ENCODE measurements at regions of chr6 and their contacts with region 1.

Region 1: GRCh38 chr6:15254070-15254841 is 8.4 kb downstream of the JARID2 start:
- DNase-seq: peak; percentile 79
- ATAC-seq: peak; percentile 73
- H3K4me3 ChIP-seq: peak overlapping the region in 1 of 5 experiments; percentile 27
- H3K4me3 Mint-ChIP-seq: peak overlapping the region; percentile 65
- H3K27ac ChIP-seq: peak overlapping the region; percentile 77 to 80
- H3K27ac Mint-ChIP-seq: peak overlapping the region; percentile 84
- H3K4me1 ChIP-seq: peaks cover 64 to 81% of the 10 kb centered on the region in 2 donors
- H3K4me1 Mint-ChIP-seq: peaks cover 92% of the 10 kb centered on the region
- H3K27me3 ChIP-seq: no peaks in the 10 kb centered on the region
- H3K27me3 Mint-ChIP-seq: no peaks in the 10 kb centered on the region
- CTCF ChIP-seq: peak; percentile 15

Region 2: DNA sequence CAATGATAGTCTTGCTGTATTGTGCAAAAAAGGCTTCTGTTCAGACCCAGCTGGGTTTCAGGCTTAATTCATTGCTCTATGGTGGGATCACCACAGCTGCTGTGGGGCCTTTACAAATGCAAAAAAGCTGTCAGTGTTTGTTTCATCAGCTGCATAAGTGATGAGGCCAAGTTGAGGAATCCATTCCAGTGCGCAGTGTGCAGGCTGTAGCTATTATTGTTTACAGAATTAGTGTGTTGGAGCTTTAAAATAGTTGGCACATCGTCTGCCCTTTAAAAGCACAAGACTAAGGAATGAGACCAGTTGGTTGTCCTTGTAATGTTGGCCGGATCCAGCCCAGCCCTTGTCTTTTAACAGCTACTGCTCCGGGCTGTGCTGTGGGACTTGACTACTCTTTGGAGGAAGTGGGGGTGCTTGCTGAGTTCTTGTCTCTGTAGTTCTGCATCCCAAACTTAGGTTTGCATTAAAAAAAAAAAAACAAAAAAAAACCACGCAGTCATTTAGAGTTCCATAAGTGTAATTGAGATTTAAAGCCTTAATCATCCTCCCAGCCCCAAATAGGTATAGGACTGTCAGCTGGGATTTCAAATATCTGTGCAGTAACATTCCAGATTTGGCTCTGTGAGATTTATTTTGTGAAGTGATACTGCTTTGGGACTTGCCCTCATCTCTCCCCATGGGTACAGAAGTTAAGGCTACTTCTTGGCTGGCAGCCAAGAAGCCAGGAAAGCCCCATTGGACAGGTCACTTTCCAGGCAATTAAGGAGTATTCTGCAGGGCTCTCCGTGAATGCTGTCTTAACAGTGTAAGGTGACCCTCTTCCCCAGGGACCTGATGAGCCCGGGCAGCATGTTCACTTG is 10.9 kb after region 1 on chr6:
- CTCF ChIA-PET with region 1: interaction called, 3 read pairs
- POLR2A ChIA-PET with region 1: interaction called, 4 read pairs
- intact Hi-C with region 1: loop called (anchors 2 kb)
- DNase-seq: no peak
- ATAC-seq: no peak
- H3K4me3 ChIP-seq: no peak overlapping the region
- H3K4me3 Mint-ChIP-seq: peak overlapping the region; percentile 68
- H3K27ac ChIP-seq: peak overlapping the region in 1 of 2 donors; percentile 41
- H3K27ac Mint-ChIP-seq: peak overlapping the region; percentile 56
- H3K4me1 ChIP-seq: peaks cover 74% of the 10 kb centered on the region in 2 donors
- H3K4me1 Mint-ChIP-seq: peaks cover 87% of the 10 kb centered on the region
- H3K27me3 ChIP-seq: no peaks in the 10 kb centered on the region
- H3K27me3 Mint-ChIP-seq: no peaks in the 10 kb centered on the region
- CTCF ChIP-seq: no peak

Region 3: GRCh38 chr6:15287670-15288375 is 33.6 kb after region 1 on chr6:
- CTCF ChIA-PET with region 1: interaction called, 6 read pairs
- POLR2A ChIA-PET with region 1: no interaction called
- intact Hi-C with region 1: loop called (anchors 2 kb)
- DNase-seq: peak; percentile 73
- ATAC-seq: peak; percentile 96
- H3K4me3 ChIP-seq: no peak overlapping the region
- H3K4me3 Mint-ChIP-seq: peak overlapping the region; percentile 56
- H3K27ac ChIP-seq: peak overlapping the region in 1 of 2 donors; percentile 23
- H3K27ac Mint-ChIP-seq: peak overlapping the region; percentile 69
- H3K4me1 ChIP-seq: peaks cover 26 to 30% of the 10 kb centered on the region in 2 donors
- H3K4me1 Mint-ChIP-seq: peaks cover 50% of the 10 kb centered on the region
- H3K27me3 ChIP-seq: no peaks in the 10 kb centered on the region
- H3K27me3 Mint-ChIP-seq: no peaks in the 10 kb centered on the region
- CTCF ChIP-seq: no peak